Activated CD4-positive, alpha-beta memory T cell treated with anti-CD3 and anti-CD28 coated beads for 36 hours (primary cell): ENCODE measurements at regions of chr11 and their contacts with region 1.

Region 1: DNA sequence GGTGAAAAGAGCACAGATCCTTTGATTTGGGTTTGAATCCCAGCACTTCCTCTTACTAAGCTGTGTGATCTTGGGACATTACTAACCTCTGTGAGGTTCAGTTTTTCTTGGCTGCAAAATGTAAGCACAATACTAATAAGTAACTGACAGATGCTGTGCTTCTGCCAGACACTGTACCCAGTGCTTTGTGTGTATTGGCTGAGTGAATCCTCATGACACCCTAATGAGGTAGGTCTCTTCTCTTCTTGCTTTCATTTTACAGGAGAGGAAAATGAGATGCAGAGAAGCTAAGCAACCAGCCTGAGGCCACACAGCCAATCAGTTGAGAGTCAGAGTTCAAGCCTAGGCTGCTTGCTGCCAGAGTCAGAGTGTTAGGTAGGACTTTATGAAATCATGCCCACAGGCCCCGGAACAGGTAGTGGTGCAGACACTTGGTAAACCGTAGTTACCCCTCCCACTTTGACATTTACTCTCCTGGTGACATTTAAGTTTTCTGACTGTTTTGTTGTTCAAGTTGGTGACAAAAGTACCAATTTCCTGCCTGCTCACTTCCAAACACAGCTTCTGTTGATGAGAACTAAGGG is 21.2 kb downstream of the PTPRJ start:
- DNase-seq: peak; percentile 91
- H3K4me3 Mint-ChIP-seq: peak overlapping the region; percentile 72
- H3K27ac Mint-ChIP-seq: peak overlapping the region; percentile 97
- H3K4me1 Mint-ChIP-seq: peaks cover 84% of the 10 kb centered on the region
- H3K27me3 Mint-ChIP-seq: no peaks in the 10 kb centered on the region

Region 2: DNA sequence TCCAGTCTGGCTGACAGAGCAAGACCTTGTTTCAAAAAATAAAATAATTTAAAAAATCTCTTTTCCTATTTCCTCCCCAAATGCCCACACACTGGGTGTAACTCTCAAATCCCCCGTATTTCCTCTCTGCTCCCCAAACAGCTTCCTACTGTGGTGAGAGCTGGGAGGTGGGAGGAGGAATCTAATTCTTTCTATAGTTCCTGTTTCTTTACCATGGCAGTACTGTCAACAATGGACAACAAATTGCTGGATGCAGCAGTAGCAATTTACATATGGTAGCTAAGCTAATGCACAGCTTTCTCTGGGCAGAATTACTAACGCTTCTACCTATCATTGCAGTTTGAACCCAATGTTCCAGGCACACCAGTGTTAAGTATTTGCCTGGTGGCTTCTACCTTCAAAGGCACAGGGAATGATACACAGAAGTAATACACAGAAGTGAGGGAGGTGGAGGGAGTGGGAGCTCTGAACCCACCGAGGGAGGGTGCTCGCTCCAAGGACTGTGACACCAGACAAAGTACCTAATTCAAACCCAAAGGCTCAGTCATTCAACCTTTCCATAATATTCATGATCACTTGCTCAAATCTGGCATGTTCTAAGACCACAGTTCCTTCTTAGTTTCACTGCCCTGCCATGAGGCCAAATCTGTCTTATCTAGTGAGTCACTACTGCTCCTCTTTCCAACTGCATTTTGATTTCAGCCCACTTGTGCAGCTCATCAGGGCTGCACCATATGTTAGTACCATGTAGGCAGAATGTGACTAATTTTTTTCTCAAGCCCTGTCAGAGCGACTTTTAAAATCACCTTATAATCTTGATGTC is 486.5 kb before region 1 on chr11:
- CTCF ChIA-PET with region 1: no interaction called
- POLR2A ChIA-PET with region 1: no interaction called
- intact Hi-C with region 1: loop called (anchors 10 kb)
- DNase-seq: peak; percentile 73
- H3K4me3 Mint-ChIP-seq: peak overlapping the region; percentile 0
- H3K27ac Mint-ChIP-seq: peak overlapping the region; percentile 56
- H3K4me1 Mint-ChIP-seq: peaks cover 82% of the 10 kb centered on the region
- H3K27me3 Mint-ChIP-seq: no peaks in the 10 kb centered on the region

Region 3: GRCh38 chr11:47863189-47863892 is 138.2 kb before region 1 on chr11:
- CTCF ChIA-PET with region 1: no interaction called
- POLR2A ChIA-PET with region 1: no interaction called
- intact Hi-C with region 1: loop called (anchors 5 kb)
- DNase-seq: no peak
- H3K4me3 Mint-ChIP-seq: no peak overlapping the region
- H3K27ac Mint-ChIP-seq: peak overlapping the region; percentile 71
- H3K4me1 Mint-ChIP-seq: peaks cover 37% of the 10 kb centered on the region
- H3K27me3 Mint-ChIP-seq: no peaks in the 10 kb centered on the region

Region 4: GRCh38 chr11:47969401-47969800 is 32.1 kb before region 1 on chr11:
- CTCF ChIA-PET with region 1: no interaction called
- POLR2A ChIA-PET with region 1: no interaction called
- intact Hi-C with region 1: no loop called
- DNase-seq: no peak
- H3K4me3 Mint-ChIP-seq: no peak overlapping the region
- H3K27ac Mint-ChIP-seq: no peak overlapping the region
- H3K4me1 Mint-ChIP-seq: peaks cover under 1% of the 10 kb centered on the region
- H3K27me3 Mint-ChIP-seq: no peaks in the 10 kb centered on the region

Region 5: GRCh38 chr11:47981050-47981621 is 20.4 kb before region 1 on chr11:
- CTCF ChIA-PET with region 1: interaction called, 16 read pairs
- POLR2A ChIA-PET with region 1: interaction called, 14 read pairs
- intact Hi-C with region 1: loop called (anchors 1 kb)
- DNase-seq: peak; percentile 39
- H3K4me3 Mint-ChIP-seq: peak overlapping the region; percentile 89
- H3K27ac Mint-ChIP-seq: peak overlapping the region; percentile 84
- H3K4me1 Mint-ChIP-seq: peaks cover 24% of the 10 kb centered on the region
- H3K27me3 Mint-ChIP-seq: no peaks in the 10 kb centered on the region

Region 6: GRCh38 chr11:48020092-48020755 is 18.7 kb after region 1 on chr11:
- CTCF ChIA-PET with region 1: interaction called, 23 read pairs
- POLR2A ChIA-PET with region 1: interaction called, 117 read pairs
- intact Hi-C with region 1: loop called (anchors 1 kb)
- DNase-seq: peak; percentile 80
- H3K4me3 Mint-ChIP-seq: peak overlapping the region; percentile 68
- H3K27ac Mint-ChIP-seq: peak overlapping the region; percentile 92
- H3K4me1 Mint-ChIP-seq: peaks cover 72% of the 10 kb centered on the region
- H3K27me3 Mint-ChIP-seq: no peaks in the 10 kb centered on the region

Region 7: GRCh38 chr11:48093795-48094642 is 92.5 kb after region 1 on chr11:
- CTCF ChIA-PET with region 1: interaction called, 4 read pairs
- POLR2A ChIA-PET with region 1: interaction called, 8 read pairs
- intact Hi-C with region 1: loop called (anchors 2 kb)
- DNase-seq: peak; percentile 20
- H3K4me3 Mint-ChIP-seq: no peak overlapping the region
- H3K27ac Mint-ChIP-seq: peak overlapping the region; percentile 3
- H3K4me1 Mint-ChIP-seq: peaks cover 78% of the 10 kb centered on the region
- H3K27me3 Mint-ChIP-seq: no peaks in the 10 kb centered on the region